ENCODE measurements at regions of chr19 and their contacts with region 1.

Region 1: GRCh38 chr19:57682226-57682766 is 519 bp downstream of the ZNF551 start:
- DNase-seq: no peak
- H3K4me3 ChIP-seq: peak overlapping the region; percentile 85
- H3K27ac ChIP-seq: no peak overlapping the region
- H3K4me1 ChIP-seq: 0 out of 2 replicates have a peak, but pooled peaks cover 7% of the 10 kb centered on the region
- H3K27me3 ChIP-seq: no peaks in the 10 kb centered on the region
- CTCF ChIP-seq: no peak

Region 2: GRCh38 chr19:57613941-57614743 is 68.2 kb before region 1 on chr19 and contains the start of gene ZNF134:
- CTCF ChIA-PET with region 1: no interaction called
- POLR2A ChIA-PET with region 1: interaction called, 5 read pairs
- intact Hi-C with region 1: loop called (anchors 1 kb)
- DNase-seq: peak; percentile 89
- H3K4me3 ChIP-seq: peak within 1 kb of the TSS; percentile 85
- H3K27ac ChIP-seq: no peak within 1 kb of the TSS
- H3K4me1 ChIP-seq: no peaks in the 10 kb centered on the region
- H3K27me3 ChIP-seq: no peaks in the 10 kb centered on the region
- CTCF ChIP-seq: peak; percentile 56; the same call in 1 of the 2 replicates
- total RNA-seq, gene ZNF134: 16.5 and 19.1 TPM in 2 replicates

Region 3: DNA sequence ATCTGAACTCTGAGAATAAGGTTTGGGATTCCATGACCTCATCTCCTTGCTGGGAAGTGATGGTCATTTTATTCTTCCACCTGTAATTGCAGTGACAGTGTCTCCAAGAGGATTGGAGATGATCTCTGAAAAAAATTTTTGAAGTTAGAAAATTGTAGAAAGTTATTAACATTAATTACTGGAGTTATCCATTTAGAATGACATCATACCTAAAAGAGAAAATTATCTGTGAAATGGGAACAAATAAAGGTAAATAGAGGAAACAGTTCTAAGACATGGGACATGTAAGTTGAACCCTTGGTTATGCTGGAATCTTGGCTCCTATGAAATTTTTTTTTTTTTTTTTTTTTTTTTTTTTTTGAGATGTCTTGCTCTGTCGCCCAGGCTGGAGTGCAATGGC is 54.9 kb before region 1 on chr19:
- CTCF ChIA-PET with region 1: no interaction called
- POLR2A ChIA-PET with region 1: no interaction called
- intact Hi-C with region 1: no loop called
- DNase-seq: no peak
- H3K4me3 ChIP-seq: no peak overlapping the region
- H3K27ac ChIP-seq: no peak overlapping the region
- H3K4me1 ChIP-seq: no peaks in the 10 kb centered on the region
- H3K27me3 ChIP-seq: no peaks in the 10 kb centered on the region
- CTCF ChIP-seq: no peak

Region 4: DNA sequence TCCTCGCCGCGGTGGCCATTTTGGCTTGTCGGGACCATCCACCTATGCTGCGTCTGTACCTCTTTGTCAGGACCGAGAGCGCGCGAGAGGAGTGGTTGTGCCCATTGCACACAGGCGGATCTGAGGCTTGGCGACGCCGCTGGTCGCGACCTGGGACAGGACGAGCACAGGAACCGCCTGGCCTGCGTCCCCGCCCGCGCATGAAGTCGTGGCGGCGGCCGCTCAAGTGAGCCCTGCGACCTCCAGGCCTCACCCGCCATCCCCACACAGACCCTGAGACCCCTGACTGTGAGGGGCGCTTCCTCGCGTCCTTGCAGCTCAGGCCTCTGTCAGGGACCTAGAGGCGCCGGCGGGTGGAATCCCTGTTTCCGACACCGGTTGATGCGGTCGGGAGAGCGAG is 104.0 kb after region 1 on chr19:
- CTCF ChIA-PET with region 1: no interaction called
- POLR2A ChIA-PET with region 1: no interaction called
- intact Hi-C with region 1: no loop called
- DNase-seq: no peak
- H3K4me3 ChIP-seq: no peak overlapping the region
- H3K27ac ChIP-seq: no peak overlapping the region
- H3K4me1 ChIP-seq: no peaks in the 10 kb centered on the region
- H3K27me3 ChIP-seq: no peaks in the 10 kb centered on the region
- CTCF ChIP-seq: no peak